AG04449 (cell line): ENCODE measurements at regions of chr6 and their contacts with region 1.

Region 1: GRCh38 chr6:106444777-106445507 is 84.4 kb downstream of the CRYBG1 start:
- DNase-seq: no peak
- H3K4me3 ChIP-seq: no peak overlapping the region
- CTCF ChIP-seq: peak; percentile 64

Region 2: GRCh38 chr6:106085984-106086813 is 358.7 kb before region 1 on chr6 and contains the start of gene PRDM1:
- CTCF ChIA-PET with region 1: interaction called, 12 read pairs
- POLR2A ChIA-PET with region 1: no interaction called
- DNase-seq: no peak
- H3K4me3 ChIP-seq: peak within 1 kb of the TSS; percentile 68
- CTCF ChIP-seq: no peak

Region 3: GRCh38 chr6:106460481-106460880 is 15.5 kb after region 1 on chr6:
- CTCF ChIA-PET with region 1: interaction called, 17 read pairs
- POLR2A ChIA-PET with region 1: no interaction called
- DNase-seq: no peak
- H3K4me3 ChIP-seq: no peak overlapping the region
- CTCF ChIP-seq: no peak

Region 4: GRCh38 chr6:106488494-106489370 is 43.8 kb after region 1 on chr6:
- CTCF ChIA-PET with region 1: no interaction called
- POLR2A ChIA-PET with region 1: no interaction called
- DNase-seq: no peak
- H3K4me3 ChIP-seq: no peak overlapping the region
- CTCF ChIP-seq: no peak

Region 5: GRCh38 chr6:106556368-106556960 is 111.5 kb after region 1 on chr6:
- CTCF ChIA-PET with region 1: interaction called, 926 read pairs
- POLR2A ChIA-PET with region 1: no interaction called
- DNase-seq: no peak
- H3K4me3 ChIP-seq: no peak overlapping the region
- CTCF ChIP-seq: peak; percentile 28

Region 6: DNA sequence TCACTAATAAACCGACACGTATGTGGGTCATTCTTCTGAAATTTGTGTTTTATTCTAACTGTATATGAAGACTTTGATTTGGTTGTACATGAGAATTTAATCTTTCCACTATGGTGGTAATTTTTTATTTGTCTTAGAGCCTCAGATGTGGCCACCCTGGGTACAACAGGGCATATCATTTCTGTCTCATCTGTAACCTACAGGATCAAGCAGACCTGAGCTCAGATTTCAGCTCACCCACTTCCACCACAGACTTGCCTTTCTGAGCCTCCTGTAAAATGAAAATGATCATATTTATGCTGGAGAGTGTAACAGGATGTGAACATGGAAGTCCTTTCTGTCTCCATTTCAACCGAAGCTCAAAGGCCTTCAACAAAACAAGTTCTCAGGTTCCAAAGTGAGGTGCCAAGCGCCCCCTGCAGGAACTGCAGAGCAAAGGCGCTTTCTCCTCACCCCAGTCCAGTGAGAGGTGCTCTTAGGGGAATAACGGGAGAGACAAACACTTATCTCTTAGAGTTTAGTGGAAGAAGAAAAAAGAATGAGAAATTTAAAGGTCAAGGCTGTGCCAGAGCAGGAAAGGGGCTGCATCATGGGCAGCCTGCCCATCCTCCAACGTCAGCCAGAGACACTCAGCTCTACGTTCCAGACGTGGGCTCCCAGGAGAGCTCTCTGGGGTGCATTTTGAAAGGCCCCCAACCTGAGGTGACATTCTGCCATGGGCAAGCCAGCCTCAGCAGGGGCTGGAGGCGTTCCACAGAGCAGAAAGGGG is 552.6 kb after region 1 on chr6:
- CTCF ChIA-PET with region 1: interaction called, 20 read pairs
- POLR2A ChIA-PET with region 1: no interaction called
- DNase-seq: peak; percentile 7
- H3K4me3 ChIP-seq: no peak overlapping the region
- CTCF ChIP-seq: peak; percentile 73

Region 7: GRCh38 chr6:107209406-107210305 is 764.7 kb after region 1 on chr6:
- CTCF ChIA-PET with region 1: no interaction called
- POLR2A ChIA-PET with region 1: no interaction called
- DNase-seq: no peak
- H3K4me3 ChIP-seq: no peak overlapping the region
- CTCF ChIP-seq: no peak